AG04449 (cell line): ENCODE measurements at regions of chr14 and their contacts with region 1.

Region 1: DNA sequence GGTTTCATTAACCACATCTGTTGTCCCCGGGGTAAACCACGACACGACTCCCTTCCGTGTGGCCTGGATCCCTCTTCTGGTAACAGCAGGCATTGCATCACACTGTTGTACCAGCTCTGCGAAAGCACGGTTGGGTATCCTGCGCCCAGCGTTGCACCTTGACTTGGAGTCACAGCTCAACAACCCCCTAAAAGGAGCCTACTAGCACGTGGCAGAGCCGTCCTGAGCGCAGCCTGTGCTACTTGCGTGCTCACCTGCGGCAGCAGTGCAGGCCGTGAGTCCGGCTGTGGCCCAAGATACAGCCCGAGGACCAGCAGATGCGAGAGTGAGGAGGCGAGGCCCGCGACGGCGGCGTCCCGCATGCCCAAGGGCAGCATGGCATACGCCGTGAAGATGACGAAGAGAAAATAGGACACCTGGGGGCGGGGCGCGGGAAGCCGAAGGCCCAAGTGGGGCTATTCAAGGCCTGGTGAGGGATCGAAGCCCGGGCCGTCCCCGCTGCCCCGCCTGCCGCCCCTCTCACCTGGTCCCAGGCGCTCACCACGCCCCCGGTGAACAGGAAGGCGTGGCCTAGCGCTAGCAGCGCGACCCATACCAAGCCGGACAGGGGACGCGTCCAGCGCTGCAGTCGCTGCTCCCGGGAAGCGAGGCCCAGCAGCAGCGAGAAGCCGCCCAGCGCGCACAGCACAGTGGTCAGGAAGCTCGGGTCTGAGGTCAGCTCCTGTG is 2.4 kb downstream of the ADCY4 start:
- DNase-seq: no peak
- H3K4me3 ChIP-seq: no peak overlapping the region; the same call in 1 of the 2 replicates
- CTCF ChIP-seq: peak; percentile 77

Region 2: GRCh38 chr14:24315807-24316603 is 16.4 kb before region 1 on chr14:
- CTCF ChIA-PET with region 1: interaction called, 688 read pairs
- POLR2A ChIA-PET with region 1: no interaction called
- DNase-seq: no peak
- H3K4me3 ChIP-seq: no peak overlapping the region
- CTCF ChIP-seq: peak; percentile 10

Region 3: DNA sequence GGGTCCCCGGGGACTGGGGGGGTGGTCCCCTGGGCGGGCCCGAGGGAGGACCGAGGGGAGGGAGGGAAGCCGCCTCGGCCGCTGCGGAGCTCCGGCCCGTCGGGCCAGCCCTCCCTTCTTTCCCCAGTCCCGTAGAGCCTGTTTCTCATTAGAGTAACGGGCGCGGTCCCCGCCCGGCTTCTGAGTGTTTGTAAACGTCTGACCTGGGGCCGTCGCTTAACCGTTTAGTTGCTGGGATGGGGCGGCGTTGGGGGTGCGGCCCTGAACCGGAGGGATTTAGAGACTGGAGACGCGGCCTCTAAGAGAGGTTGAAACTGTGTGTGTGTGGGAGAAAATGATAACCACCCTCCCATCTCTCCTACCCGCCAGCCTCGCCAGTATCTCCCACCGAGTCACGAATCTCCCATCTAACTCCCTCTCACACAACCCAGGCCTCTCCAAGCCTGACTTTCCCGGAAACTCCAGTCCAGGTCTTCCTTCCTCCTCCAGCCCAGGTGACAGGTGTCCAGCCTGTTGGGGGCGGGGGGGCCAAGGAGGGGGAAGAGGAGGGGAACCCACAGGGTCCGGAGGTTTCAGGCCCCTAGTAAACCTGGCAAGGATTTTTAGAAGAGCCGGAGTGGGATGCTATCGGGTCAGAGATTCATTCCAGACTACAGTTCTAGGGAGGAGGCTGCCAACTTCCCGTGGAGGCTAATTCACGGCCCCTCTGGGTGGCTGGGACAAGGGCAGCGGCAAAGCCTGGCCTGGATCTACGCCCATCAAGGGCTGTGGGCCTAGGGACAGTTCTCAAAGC is 34.5 kb after region 1 on chr14:
- CTCF ChIA-PET with region 1: interaction called, 79 read pairs
- POLR2A ChIA-PET with region 1: interaction called, 3 read pairs
- DNase-seq: peak; percentile 81
- H3K4me3 ChIP-seq: peak overlapping the region; percentile 59
- CTCF ChIP-seq: no peak

Region 4: DNA sequence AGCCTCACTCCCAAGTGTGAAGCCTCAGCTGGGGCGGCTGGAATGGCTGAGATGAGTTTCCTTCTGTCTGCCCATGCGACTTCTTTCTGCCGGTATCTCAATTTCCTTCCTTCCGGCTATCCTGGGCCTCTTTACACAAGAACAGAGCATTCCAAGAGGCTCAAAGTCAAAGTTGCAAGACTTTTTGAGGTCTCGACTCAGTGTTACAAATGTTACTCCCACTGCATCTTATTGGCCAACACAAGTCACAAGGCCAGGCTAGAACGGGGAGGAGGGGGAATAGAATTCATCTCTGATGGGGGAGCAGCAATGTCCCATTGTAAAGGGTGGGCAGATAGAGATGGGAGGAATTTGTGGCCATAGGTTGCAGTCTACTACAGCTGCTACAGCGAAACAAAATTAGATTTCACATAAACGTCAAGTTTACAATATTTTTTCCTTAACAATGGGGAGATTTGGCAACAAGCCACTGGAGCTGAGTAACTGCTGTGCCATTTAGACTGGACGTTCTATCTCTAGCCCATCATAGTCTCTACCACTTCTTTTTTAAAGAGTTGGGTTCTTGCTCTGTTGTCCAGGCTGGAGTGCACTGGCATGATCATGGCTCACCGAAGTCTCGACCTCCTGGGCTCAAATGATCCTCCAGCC is 56.9 kb after region 1 on chr14:
- CTCF ChIA-PET with region 1: interaction called, 29 read pairs
- POLR2A ChIA-PET with region 1: no interaction called
- DNase-seq: no peak
- H3K4me3 ChIP-seq: no peak overlapping the region
- CTCF ChIP-seq: no peak

Region 5: GRCh38 chr14:24411443-24412389 is 79.3 kb after region 1 on chr14:
- CTCF ChIA-PET with region 1: interaction called, 1,633 read pairs
- POLR2A ChIA-PET with region 1: no interaction called
- DNase-seq: no peak
- H3K4me3 ChIP-seq: no peak overlapping the region
- CTCF ChIP-seq: peak; percentile 76